ENCODE measurements at regions of chr14 and their contacts with region 1.

Region 1: DNA sequence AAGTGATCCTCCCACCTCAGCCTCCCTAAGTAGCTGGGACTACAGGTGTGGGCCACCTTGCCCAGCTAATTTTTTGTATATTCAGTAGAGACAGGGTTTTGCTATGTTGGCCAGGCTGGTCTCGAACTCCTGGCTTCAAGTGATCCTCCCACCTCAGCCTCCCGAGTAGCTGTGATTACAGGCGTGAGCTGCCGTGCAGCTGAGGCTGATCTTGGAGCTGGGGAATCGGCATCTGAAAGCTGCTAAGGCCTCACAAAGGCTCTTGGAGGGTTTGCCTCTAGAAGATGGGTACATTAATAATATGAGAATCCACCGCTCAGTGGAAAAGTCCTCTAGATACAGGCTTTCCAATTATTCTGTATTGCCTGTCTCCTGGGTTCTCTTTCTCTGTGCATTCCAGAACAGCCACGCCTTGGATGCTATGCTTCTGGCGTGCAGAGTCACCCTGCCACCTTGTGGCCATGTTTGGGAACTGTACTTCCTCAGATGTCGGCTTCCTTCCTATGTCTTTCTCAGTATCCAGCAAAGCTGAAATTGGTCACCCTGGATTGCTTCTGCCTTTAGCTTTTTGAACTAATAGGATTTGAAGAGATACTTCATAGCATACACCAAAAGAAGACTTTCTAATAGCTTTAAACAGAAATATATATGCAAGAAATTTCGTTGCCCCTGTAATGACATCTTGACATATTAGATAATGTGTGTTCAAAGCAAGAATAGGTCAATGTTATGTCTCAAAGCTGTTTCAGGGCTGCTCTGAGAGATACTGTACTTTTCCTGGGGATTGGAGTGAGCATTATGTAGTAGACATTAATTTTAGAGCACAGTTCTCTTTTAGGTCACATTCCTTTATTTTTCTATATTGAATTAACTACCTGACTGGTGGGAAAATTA is 75.4 kb downstream of the SNAPC1 start:
- DNase-seq: no peak
- H3K4me3 ChIP-seq: no peak overlapping the region
- H3K27ac ChIP-seq: no peak overlapping the region
- H3K4me1 ChIP-seq: no peaks in the 10 kb centered on the region
- H3K27me3 ChIP-seq: no peaks in the 10 kb centered on the region
- CTCF ChIP-seq: peak; percentile 85 to 98 (median 93)
- POLR2A ChIP-seq: no peak

Region 2: DNA sequence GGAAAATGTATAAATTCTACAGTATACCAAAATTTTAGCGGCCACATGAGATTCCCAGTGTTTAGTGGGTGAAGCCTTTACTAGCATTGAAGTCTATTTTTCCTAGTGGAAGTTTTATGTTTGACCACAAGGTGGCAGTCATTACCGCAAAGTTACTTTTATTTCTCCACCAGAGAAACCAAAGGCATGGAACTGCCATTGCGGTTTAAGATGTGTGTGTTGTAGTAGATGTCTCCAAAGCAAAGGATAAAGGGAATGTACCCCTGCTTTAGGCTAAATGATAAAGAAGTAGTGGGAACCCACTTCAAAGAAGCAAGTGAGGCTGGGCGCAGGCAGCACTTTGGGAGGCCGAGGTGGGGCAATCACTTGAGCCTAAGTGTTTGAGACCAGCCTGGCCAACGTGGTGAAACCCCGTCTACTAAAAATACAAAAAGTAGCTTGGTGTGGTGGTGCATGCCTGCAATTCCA is 375.7 kb before region 1 on chr14:
- intact Hi-C with region 1: loop called (anchors 5 kb)
- DNase-seq: peak in 1 of 2 donors; percentile 83
- H3K4me3 ChIP-seq: no peak overlapping the region
- H3K27ac ChIP-seq: no peak overlapping the region
- H3K4me1 ChIP-seq: peaks cover 18% of the 10 kb centered on the region
- H3K27me3 ChIP-seq: no peaks in the 10 kb centered on the region
- CTCF ChIP-seq: peak; percentile 71 to 82 (median 73)
- POLR2A ChIP-seq: no peak

Region 3: DNA sequence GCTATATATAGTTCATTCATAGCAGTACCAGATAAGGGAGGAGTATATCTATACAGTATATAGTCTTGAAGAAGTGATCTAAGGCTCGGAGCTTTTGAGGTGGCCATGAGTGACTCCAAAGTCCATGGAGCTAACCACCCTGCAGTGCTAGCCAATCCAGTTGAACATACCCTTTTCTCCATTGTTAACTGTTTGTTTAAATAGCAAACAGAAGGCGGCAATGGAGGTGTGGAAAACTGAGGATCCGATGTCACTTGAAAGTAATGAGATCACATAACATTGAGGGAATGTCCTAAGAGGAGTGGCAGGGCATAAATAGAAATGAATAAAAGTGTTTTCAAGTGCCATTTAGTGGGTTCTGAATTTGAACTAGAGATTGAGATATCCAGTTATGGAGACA is 87.7 kb before region 1 on chr14:
- intact Hi-C with region 1: loop called (anchors 10 kb)
- DNase-seq: no peak
- H3K4me3 ChIP-seq: peak overlapping the region in 1 of 2 donors; percentile 51
- H3K27ac ChIP-seq: peak overlapping the region; percentile 80
- H3K4me1 ChIP-seq: peaks cover 13% of the 10 kb centered on the region
- H3K27me3 ChIP-seq: no peaks in the 10 kb centered on the region
- CTCF ChIP-seq: no peak
- POLR2A ChIP-seq: no peak

Measured in vagina (tissue), 2 donors.